CD8-positive, alpha-beta T cell (primary cell): ENCODE measurements at regions of chr12 and their contacts with region 1.

Region 1: DNA sequence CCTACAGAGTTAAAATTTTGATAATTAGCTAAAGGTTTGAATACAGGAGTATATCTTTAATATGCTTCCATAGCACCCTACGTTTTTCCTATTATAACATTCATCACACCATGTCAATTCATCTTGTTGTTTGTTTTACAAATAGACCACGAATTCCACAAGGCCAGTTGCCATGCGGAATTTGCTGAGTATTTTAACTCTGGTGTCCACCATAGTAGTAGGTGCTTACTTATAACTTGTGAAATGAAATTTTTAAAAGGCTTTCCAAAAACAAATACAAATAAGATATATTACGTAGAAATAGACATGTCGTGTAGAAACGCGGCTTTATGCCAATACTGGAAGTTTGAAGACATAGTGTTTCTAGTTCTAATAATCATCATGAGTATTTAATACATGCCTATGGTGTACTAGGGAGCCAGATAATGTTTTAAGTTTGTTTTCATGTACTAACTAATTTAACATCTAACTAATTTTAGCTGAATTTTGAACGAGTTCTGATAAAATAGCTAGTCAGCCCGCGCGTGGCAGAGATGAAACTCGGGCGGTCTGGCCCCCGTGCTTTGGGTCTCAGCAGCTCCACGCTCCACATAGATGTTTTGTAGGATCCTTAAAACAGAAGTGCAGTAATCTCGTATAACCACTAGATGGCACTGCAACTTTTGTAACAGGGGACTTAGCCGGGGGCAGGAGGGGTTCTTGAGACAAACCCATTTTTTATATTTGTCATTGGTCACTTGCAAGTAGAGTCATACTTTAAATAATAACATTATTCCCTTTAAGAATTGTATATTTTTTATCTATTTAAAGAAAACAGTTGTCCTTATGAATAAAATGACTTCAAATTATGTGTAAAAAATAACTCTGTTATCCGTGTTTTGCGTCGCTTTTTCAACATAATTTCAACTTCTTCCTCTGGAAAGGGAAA is 10.2 kb downstream of the CD69 start:
- DNase-seq: peak in 7 of 9 experiments; percentile 43 to 88 (median 58)
- ATAC-seq: peak; percentile 60
- H3K4me3 ChIP-seq: no peak overlapping the region
- H3K4me3 Mint-ChIP-seq: peak overlapping the region; percentile 59
- H3K27ac ChIP-seq: no peak overlapping the region
- H3K27ac Mint-ChIP-seq: peak overlapping the region; percentile 69
- H3K4me1 ChIP-seq: peaks cover 27% of the 10 kb centered on the region
- H3K4me1 Mint-ChIP-seq: peaks cover 48% of the 10 kb centered on the region
- H3K27me3 ChIP-seq: no peaks in the 10 kb centered on the region
- H3K27me3 Mint-ChIP-seq: no peaks in the 10 kb centered on the region
- CTCF ChIP-seq: peak; percentile 80

Region 2: GRCh38 chr12:9634177-9634803 is 116.2 kb before region 1 on chr12:
- CTCF ChIA-PET with region 1: interaction called, 40 read pairs
- POLR2A ChIA-PET with region 1: interaction called, 3 read pairs
- intact Hi-C with region 1: loop called in 1 of 2 experiments (anchors 1 kb)
- DNase-seq: peak; percentile 59 to 87 (median 83)
- ATAC-seq: peak; percentile 95
- H3K4me3 ChIP-seq: no peak overlapping the region
- H3K4me3 Mint-ChIP-seq: peak overlapping the region; percentile 33
- H3K27ac ChIP-seq: peak overlapping the region in 1 of 2 experiments; percentile 23
- H3K27ac Mint-ChIP-seq: peak overlapping the region; percentile 92
- H3K4me1 ChIP-seq: peaks cover 43% of the 10 kb centered on the region
- H3K4me1 Mint-ChIP-seq: peaks cover 64% of the 10 kb centered on the region
- H3K27me3 ChIP-seq: no peaks in the 10 kb centered on the region
- H3K27me3 Mint-ChIP-seq: no peaks in the 10 kb centered on the region
- CTCF ChIP-seq: peak; percentile 93

Region 3: DNA sequence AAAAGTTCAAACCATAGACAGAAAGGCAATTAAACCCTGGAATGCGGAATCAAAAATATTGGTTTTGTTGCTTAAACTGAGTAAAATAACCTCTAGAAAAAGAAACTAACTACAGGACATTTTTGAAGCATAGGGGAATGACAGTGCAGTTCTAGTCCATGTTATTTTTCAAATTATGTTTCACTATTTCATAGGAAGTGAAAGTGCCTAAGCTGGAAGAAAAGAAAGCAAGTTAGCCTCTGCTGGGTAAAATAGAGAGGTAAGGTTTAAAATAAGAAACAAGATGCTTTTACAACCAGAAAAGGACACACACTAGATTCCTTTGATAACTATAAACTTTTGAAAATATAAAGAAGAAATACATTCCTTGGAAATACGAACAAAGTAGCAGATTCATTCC is 18.7 kb before region 1 on chr12:
- CTCF ChIA-PET with region 1: interaction called, 13 read pairs
- POLR2A ChIA-PET with region 1: no interaction called
- intact Hi-C with region 1: no loop called
- DNase-seq: no peak
- ATAC-seq: no peak
- H3K4me3 ChIP-seq: no peak overlapping the region
- H3K4me3 Mint-ChIP-seq: peak overlapping the region; percentile 18
- H3K27ac ChIP-seq: no peak overlapping the region
- H3K27ac Mint-ChIP-seq: no peak overlapping the region
- H3K4me1 ChIP-seq: peaks cover 5% of the 10 kb centered on the region
- H3K4me1 Mint-ChIP-seq: peaks cover 21% of the 10 kb centered on the region
- H3K27me3 ChIP-seq: no peaks in the 10 kb centered on the region
- H3K27me3 Mint-ChIP-seq: peaks cover 1% of the 10 kb centered on the region
- CTCF ChIP-seq: no peak

Region 4: DNA sequence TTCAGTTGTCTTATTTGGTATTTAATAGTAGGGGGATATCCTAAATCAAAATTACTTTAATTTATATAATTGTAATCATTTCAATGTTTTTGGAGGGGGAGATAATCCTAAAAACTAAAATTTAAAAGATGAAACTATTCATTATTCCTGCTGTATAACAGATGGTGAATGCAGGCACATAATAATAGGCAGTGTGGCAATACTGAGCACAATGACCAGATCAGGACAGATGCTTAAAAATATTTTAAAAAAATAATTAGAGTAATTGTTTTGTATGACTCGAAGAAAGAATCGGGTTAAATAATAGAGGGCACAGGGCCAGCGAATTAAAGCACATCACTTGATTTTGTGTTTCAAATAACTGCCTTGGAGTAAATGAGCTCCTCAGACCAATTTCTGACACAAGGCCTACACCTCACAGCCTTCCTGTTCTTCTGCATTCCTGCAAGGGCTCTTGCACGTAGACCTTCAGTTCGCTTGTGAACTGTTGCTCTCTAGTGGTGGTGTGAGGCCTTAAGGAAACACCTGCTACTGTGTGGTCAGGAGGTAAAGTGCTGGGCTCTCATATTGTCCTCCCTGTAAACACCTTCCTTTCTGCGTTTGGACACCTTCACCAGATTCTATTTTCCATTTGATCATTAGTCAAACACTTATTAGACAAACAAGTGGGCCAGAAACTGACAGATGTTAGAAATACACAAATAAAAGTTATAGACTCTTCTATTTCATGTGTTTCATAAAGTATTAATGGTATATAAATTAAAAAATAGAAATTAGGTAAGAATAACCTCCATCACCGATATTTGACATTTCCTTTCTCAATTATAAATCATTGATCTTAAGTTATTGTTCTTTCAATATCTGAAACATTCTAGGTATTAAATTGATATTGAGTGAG is 47.4 kb after region 1 on chr12:
- CTCF ChIA-PET with region 1: interaction called, 483 read pairs
- POLR2A ChIA-PET with region 1: interaction called, 42 read pairs
- intact Hi-C with region 1: loop called (anchors 1 kb)
- DNase-seq: peak; percentile 37 to 91 (median 67)
- ATAC-seq: peak; percentile 95
- H3K4me3 ChIP-seq: no peak overlapping the region
- H3K4me3 Mint-ChIP-seq: no peak overlapping the region
- H3K27ac ChIP-seq: no peak overlapping the region
- H3K27ac Mint-ChIP-seq: peak overlapping the region; percentile 46
- H3K4me1 ChIP-seq: peaks cover 49% of the 10 kb centered on the region
- H3K4me1 Mint-ChIP-seq: peaks cover 45% of the 10 kb centered on the region
- H3K27me3 ChIP-seq: no peaks in the 10 kb centered on the region
- H3K27me3 Mint-ChIP-seq: no peaks in the 10 kb centered on the region
- CTCF ChIP-seq: peak; percentile 86

Region 5: GRCh38 chr12:9869307-9870161 is 119.0 kb after region 1 on chr12 and contains the start of gene CLEC2B:
- CTCF ChIA-PET with region 1: interaction called, 9 read pairs
- POLR2A ChIA-PET with region 1: no interaction called
- intact Hi-C with region 1: loop called in 1 of 2 experiments (anchors 5 kb)
- DNase-seq: peak in 3 of 9 experiments; percentile 50 to 86 (median 71)
- ATAC-seq: peak; percentile 70
- H3K4me3 ChIP-seq: peak within 1 kb of the TSS; percentile 41 to 64
- H3K4me3 Mint-ChIP-seq: peak within 1 kb of the TSS; percentile 89
- H3K27ac ChIP-seq: peak within 1 kb of the TSS; percentile 79 to 92
- H3K27ac Mint-ChIP-seq: peak within 1 kb of the TSS; percentile 96
- H3K4me1 ChIP-seq: peaks cover 7% of the 10 kb centered on the region
- H3K4me1 Mint-ChIP-seq: peaks cover 36% of the 10 kb centered on the region
- H3K27me3 ChIP-seq: no peaks in the 10 kb centered on the region
- H3K27me3 Mint-ChIP-seq: no peaks in the 10 kb centered on the region
- CTCF ChIP-seq: no peak
- total RNA-seq, gene CLEC2B: 141 to 145 TPM

Region 6: GRCh38 chr12:9940375-9940774 is 189.8 kb after region 1 on chr12:
- CTCF ChIA-PET with region 1: interaction called, 15 read pairs
- POLR2A ChIA-PET with region 1: no interaction called
- intact Hi-C with region 1: no loop called
- DNase-seq: peak in 2 of 9 experiments; percentile 33 to 55
- ATAC-seq: no peak
- H3K4me3 ChIP-seq: no peak overlapping the region
- H3K4me3 Mint-ChIP-seq: no peak overlapping the region
- H3K27ac ChIP-seq: no peak overlapping the region
- H3K27ac Mint-ChIP-seq: no peak overlapping the region
- H3K4me1 ChIP-seq: no peaks in the 10 kb centered on the region
- H3K4me1 Mint-ChIP-seq: peaks cover 10% of the 10 kb centered on the region
- H3K27me3 ChIP-seq: no peaks in the 10 kb centered on the region
- H3K27me3 Mint-ChIP-seq: no peaks in the 10 kb centered on the region
- CTCF ChIP-seq: peak; percentile 41

Region 7: DNA sequence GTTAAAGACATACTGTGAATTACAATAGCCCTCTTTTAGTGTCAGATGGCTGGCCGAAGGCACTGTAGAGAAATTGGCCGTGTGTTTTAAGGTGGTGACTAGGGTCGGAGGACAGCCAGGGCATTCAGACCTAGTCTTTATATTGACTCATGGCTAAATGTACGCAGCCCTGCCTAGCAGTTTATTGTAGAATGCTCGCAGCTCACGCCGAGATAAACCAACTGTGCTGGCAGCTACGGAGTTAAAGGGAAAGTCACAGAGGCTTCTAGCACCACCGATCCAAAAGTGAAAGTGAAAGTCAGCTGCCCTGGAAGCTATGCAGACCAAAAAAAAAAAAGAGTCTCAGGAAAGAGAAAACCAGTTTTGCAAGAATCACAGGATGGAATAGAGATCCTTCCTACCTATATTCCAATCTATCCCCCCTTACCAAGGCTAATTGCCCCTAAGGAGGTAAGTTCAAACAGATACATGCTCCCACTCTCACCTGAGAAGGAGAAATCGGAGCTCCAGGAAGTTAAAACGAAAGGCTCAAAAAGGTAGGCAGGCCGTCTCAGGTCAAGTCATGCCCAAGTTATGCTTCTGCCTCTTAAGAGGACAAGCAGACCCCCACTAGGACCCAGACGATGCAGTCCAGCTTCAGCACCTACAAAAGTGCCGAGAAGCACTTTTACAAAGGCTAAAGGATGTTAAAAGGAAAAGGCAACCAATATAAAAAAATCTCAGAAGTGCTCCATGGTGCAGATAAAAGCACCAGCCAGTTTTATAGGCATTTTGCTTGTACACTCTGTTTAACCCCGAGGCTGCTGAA is 614.5 kb after region 1 on chr12:
- CTCF ChIA-PET with region 1: no interaction called
- POLR2A ChIA-PET with region 1: no interaction called
- intact Hi-C with region 1: loop called in 1 of 2 experiments (anchors 10 kb)
- DNase-seq: peak in 7 of 9 experiments; percentile 40 to 93 (median 70)
- ATAC-seq: peak; percentile 66
- H3K4me3 ChIP-seq: peak overlapping the region; percentile 60 to 77
- H3K4me3 Mint-ChIP-seq: no peak overlapping the region
- H3K27ac ChIP-seq: peak overlapping the region; percentile 71 to 86
- H3K27ac Mint-ChIP-seq: no peak overlapping the region
- H3K4me1 ChIP-seq: peaks cover 83% of the 10 kb centered on the region
- H3K4me1 Mint-ChIP-seq: peaks cover 36% of the 10 kb centered on the region
- H3K27me3 ChIP-seq: no peaks in the 10 kb centered on the region
- H3K27me3 Mint-ChIP-seq: no peaks in the 10 kb centered on the region
- CTCF ChIP-seq: no peak